ENCODE measurements at regions of chr3 and their contacts with region 1.

Region 1: GRCh38 chr3:87478716-87479115 is 202.3 kb upstream of the POU1F1 start:
- DNase-seq: no peak
- H3K4me3 ChIP-seq: no peak overlapping the region
- H3K27ac ChIP-seq: no peak overlapping the region
- H3K4me1 ChIP-seq: no peaks in the 10 kb centered on the region
- H3K27me3 ChIP-seq: no peaks in the 10 kb centered on the region
- CTCF ChIP-seq: no peak

Region 2: DNA sequence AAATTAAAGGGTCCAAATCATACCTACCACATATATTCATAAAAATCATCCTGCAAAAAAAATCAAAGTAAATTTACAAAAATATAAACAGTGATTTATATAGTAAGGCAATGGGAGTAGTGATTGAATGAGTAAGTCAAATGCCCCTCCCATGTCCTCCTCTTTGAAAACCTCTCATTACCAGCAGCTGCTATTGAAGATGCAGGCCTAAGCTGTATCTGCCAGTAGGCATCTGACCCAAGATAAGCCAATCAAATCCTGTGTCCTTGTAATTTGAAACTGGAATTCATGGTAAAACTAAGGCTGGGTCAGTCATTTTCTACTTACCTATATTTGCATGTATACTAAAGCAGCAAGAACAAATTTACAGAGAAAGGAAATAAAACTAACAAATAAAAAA is 142.0 kb before region 1 on chr3:
- CTCF ChIA-PET with region 1: no interaction called
- POLR2A ChIA-PET with region 1: interaction called, 15 read pairs
- intact Hi-C with region 1: no loop called
- DNase-seq: peak; percentile 26
- H3K4me3 ChIP-seq: no peak overlapping the region
- H3K27ac ChIP-seq: no peak overlapping the region
- H3K4me1 ChIP-seq: no peaks in the 10 kb centered on the region
- H3K27me3 ChIP-seq: no peaks in the 10 kb centered on the region
- CTCF ChIP-seq: no peak

Region 3: DNA sequence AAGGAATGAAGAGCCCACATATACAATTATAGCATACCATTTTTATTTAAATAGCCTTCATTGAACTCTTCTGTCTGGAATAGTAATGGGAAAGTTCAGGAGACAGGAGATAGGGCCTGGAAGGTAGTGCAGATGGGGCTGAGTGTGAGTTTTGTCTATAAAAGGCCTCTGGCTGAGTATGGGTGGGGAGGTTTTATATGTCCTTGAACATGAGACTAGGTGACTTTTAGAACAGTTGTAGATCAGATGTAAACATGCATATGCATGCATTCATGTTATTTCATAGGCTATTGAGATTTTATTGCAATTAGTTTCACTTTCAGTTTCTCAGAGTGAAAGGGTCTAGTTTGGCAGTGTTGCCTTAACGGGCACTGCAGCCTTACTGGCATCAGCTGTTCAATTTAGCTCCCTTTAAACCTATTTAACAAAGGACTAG is 552.9 kb after region 1 on chr3:
- CTCF ChIA-PET with region 1: no interaction called
- POLR2A ChIA-PET with region 1: no interaction called
- intact Hi-C with region 1: no loop called
- DNase-seq: peak; percentile 24
- H3K4me3 ChIP-seq: peak overlapping the region; percentile 5
- H3K27ac ChIP-seq: no peak overlapping the region
- H3K4me1 ChIP-seq: peaks cover 6% of the 10 kb centered on the region
- H3K27me3 ChIP-seq: no peaks in the 10 kb centered on the region
- CTCF ChIP-seq: no peak